PC-9 (cell line): ENCODE measurements at regions of chr1 and their contacts with region 1.

Region 1: GRCh38 chr1:40040511-40041465 is at the start of gene CAP1:
- DNase-seq: peak; percentile 94 to 100
- H3K4me3 ChIP-seq: peak within 1 kb of the TSS; percentile 99
- H3K27ac ChIP-seq: peak within 1 kb of the TSS; percentile 98
- H3K4me1 ChIP-seq: peaks cover 36% of the 10 kb centered on the region
- H3K27me3 ChIP-seq: no peaks in the 10 kb centered on the region
- CTCF ChIP-seq: no peak
- total RNA-seq, gene CAP1: 322 and 354 TPM in 2 replicates

Region 2: DNA sequence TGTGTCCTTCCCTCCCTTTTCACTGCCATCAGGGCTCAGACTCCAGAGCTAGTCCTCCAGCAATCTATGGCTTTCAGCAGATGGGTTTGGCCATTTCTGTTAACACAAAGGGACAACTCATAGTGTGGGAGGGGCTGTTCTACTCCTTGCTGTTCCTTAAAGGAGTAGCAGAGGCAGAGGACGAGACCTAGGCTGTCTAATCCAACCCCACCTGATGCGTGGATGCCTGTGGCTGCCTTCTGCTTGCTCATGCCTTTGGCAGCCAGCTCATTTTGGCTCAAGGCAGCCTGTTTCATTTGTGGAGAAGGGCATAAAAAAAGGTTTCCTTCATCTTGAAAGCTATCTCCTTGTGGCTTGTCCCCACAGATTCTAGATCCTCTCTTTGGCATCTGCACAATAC is 58.8 kb before region 1 on chr1:
- CTCF ChIA-PET with region 1: interaction called, 4 read pairs
- POLR2A ChIA-PET with region 1: interaction called, 3 read pairs
- intact Hi-C with region 1: loop called (anchors 1 kb)
- DNase-seq: peak; percentile 90 to 93
- H3K4me3 ChIP-seq: no peak overlapping the region
- H3K27ac ChIP-seq: peak overlapping the region; percentile 65
- H3K4me1 ChIP-seq: peaks cover 36% of the 10 kb centered on the region
- H3K27me3 ChIP-seq: no peaks in the 10 kb centered on the region
- CTCF ChIP-seq: no peak

Region 3: DNA sequence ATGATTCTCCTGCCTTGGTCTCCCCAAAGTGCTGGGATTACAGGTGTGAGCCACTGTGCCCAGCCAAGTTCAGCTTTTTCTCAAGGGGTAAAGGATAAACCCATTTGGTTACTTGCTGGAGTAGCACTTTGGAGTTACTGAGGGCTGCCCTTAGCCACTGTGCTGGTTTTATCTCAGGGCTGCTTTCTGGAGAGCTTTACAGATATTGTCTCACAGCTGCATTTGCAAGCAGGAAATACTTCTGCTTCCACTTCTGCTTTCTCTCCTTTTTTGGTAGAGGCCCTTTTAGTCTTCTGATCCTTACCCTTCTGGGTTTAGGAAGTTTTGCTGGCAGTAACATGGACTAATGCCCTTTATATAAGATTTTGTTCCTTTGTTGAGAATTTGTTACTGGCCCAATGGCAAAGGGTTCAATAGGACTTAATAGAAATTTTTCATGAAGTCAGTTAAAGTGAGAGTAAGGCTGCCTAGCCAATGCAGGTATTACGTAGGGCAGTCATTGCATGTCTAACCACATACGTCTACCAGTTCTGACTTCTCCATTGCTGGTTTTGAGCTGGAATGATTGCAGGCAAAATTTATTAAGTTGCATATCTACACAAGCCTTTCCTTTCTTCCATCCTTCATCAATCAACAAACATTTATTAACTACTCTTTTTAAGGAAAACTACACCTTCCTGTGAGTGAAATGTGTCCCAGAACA is 24.2 kb after region 1 on chr1:
- CTCF ChIA-PET with region 1: no interaction called
- POLR2A ChIA-PET with region 1: interaction called, 10 read pairs
- intact Hi-C with region 1: no loop called
- DNase-seq: no peak
- H3K4me3 ChIP-seq: no peak overlapping the region
- H3K27ac ChIP-seq: no peak overlapping the region
- H3K4me1 ChIP-seq: peaks cover 9% of the 10 kb centered on the region
- H3K27me3 ChIP-seq: no peaks in the 10 kb centered on the region
- CTCF ChIP-seq: no peak

Region 4: DNA sequence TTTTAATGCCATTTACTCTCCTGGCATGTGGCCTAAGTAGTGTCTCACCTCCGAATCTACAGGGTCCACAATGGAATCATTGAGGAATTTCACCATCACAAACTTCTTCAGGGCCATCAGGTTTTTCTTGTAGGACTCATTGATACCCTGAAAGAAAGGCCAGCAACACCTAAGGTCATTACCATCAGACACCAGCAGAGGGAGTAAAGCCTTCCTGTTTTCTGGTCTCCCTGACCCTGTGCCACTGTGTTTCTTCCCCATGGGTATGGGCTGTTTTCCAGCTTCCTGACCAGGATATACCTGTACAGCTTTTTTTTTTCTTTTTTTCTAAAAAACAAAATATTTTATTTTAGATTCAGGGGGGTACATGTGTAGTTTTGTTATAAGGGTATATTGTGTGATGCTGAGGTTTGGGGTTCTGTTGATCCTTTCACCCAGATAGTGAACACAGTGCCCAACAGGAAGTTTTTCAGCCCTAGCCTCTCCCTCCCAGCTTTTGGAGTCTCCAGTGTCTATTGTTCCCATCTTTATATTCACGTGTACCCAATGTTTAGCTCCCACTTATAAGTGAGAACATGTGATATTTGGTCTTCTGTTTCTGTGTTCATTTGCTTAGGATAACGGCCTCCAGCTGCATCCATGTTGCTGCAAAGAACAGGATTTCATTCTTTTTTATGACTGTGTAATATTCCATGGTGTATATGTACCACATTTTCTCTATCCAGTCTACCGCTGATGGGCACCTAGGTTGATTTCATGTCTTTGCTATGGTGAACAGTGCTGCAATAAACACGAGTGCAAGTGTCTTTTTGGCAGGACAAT is 37.9 kb after region 1 on chr1:
- CTCF ChIA-PET with region 1: no interaction called
- POLR2A ChIA-PET with region 1: no interaction called
- intact Hi-C with region 1: no loop called
- DNase-seq: peak; percentile 65 to 73
- H3K4me3 ChIP-seq: no peak overlapping the region
- H3K27ac ChIP-seq: no peak overlapping the region
- H3K4me1 ChIP-seq: no peaks in the 10 kb centered on the region
- H3K27me3 ChIP-seq: no peaks in the 10 kb centered on the region
- CTCF ChIP-seq: peak; percentile 93

Region 5: DNA sequence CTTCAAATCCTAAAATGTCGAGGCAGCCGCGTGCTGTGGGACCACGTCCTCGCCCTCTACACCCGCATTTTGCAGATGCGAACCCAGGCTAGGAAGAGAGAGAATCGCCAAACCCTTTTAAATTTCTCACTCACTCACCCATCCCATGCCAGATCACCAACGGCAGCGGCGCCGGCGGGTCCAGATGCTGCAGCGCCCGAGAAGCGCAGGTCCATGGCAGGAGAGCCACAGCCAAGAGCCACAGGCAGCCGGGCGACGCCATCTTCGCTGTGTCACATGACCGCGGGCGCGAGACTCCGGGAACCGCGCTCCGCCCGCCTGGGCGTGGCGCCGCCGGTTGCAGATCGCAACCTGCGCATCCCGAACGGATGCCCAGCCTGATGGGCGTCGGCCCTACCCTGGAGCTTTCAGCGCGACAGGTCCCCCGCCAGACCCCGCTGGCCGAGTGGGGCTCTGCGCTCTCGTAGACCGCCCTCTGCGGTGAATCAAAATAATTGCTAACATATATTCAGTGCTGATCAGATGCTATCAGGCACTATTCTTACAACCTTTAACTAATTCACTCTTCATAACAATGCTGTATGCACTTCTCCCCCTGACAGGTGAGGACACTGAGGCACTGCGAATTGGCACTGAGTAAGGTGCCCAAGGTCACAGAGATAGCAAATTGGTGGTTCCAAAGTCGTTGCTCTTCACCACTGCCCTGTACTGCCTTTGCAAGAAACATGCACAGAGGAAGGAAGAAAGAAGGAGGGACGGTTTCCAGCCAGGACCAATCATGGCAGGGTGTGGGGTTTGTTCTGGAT is 56.4 kb after region 1 on chr1 and contains the start of gene PPT1:
- CTCF ChIA-PET with region 1: no interaction called
- POLR2A ChIA-PET with region 1: interaction called, 13 read pairs
- intact Hi-C with region 1: no loop called
- DNase-seq: peak; percentile 66 to 80
- H3K4me3 ChIP-seq: peak within 1 kb of the TSS; percentile 92
- H3K27ac ChIP-seq: peak within 1 kb of the TSS; percentile 40; the same call in 1 of the 2 replicates
- H3K4me1 ChIP-seq: peaks cover 47% of the 10 kb centered on the region
- H3K27me3 ChIP-seq: no peaks in the 10 kb centered on the region
- CTCF ChIP-seq: no peak
- total RNA-seq, gene PPT1: 120 and 154 TPM in 2 replicates

Region 6: DNA sequence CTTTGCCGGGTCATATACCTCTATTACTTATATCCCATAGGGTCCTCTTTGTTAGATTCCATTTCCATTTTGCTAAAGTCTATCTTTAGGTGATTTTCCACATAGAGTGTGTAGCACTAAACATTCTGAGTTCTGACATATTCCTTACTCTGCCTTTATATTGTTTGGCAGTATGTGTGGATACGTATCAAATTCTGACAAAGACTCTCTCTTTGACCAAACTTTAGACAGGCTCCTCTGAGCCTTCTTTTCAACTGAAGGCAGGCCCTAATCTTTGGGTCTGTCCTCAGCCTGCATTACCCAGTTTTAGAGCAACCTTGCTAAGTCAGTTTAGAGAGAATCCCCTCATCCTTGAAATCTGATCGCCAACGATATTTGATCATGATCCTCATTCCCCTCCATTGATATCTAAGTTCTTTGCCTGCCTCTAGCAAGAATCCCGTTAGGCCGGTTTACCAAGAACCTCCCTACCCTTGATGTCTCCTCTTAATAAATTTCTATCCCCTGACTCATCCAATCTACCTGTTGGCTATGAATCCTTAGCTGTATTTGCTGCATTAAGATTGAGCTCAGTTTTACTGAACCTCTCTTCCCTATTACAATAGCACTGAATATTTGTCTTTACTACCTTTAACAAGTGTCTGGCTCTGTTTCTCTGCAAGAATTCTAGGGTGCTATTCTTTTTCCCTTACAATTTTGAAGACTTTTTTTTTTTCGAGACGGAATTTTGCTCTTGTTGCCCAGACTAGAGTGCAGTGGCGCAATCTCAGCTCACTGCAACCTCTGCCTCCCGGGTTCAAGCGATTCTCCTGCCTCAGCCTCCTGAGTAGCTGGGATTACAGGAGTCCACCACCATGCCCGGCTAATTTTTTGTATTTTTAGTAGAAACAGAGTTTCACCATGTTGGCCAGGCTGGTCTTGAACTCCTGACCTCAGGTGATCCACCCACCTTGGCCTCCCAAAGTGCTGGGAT is 66.8 kb after region 1 on chr1:
- CTCF ChIA-PET with region 1: no interaction called
- POLR2A ChIA-PET with region 1: interaction called, 16 read pairs
- intact Hi-C with region 1: no loop called
- DNase-seq: peak; percentile 79 to 99
- H3K4me3 ChIP-seq: peak overlapping the region; percentile 34; the same call in 1 of the 2 replicates
- H3K27ac ChIP-seq: peak overlapping the region; percentile 87
- H3K4me1 ChIP-seq: peaks cover 64% of the 10 kb centered on the region
- H3K27me3 ChIP-seq: no peaks in the 10 kb centered on the region
- CTCF ChIP-seq: no peak